GM12878 (cell line): ENCODE measurements at regions of chr6 and their contacts with region 1.

Region 1: GRCh38 chr6:125888989-125889656 is 67.4 kb upstream of the HINT3 start:
- DNase-seq: no peak
- ATAC-seq: peak; percentile 66
- H3K4me3 ChIP-seq: no peak overlapping the region
- H3K27ac ChIP-seq: no peak overlapping the region
- H3K4me1 ChIP-seq: no peaks in the 10 kb centered on the region
- H3K27me3 ChIP-seq: no peaks in the 10 kb centered on the region
- CTCF ChIP-seq: peak; percentile 46 to 52 (median 50)
- EP300 ChIP-seq: no peak
- POLR2A ChIP-seq: no peak
- RAD21 ChIP-seq: peak; percentile 51

Region 2: DNA sequence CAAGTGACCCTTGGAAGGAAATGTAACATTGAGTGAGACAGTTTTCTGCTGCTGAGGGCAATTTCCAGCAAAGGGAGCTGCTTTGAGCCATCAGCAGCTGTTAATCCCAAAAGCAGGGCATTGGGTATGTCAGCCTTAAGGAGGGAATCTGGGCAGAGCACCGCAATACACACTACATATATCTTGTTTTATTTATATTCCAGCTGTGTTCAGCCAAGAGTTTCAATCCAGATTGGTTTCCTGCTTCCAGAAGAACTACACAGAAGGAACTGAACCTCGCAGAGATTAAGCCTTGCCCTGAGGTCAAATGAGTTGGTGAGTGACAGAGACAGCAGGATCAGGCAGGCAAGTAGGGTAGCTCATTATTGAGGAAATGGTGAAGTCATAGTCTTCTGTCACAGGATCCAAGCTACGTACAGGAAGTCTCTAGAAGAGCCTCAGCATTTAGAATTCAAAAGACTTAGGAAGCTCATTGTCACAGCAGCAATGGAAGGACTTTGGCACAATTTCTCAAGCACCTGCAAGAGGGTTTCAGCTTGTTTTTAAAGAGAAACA is 249.6 kb before region 1 on chr6:
- CTCF ChIA-PET with region 1: no interaction called
- POLR2A ChIA-PET with region 1: no interaction called
- RAD21 ChIA-PET with region 1: no interaction called
- SMC1A ChIA-PET with region 1: no interaction called
- in situ Hi-C with region 1: no loop called
- intact Hi-C with region 1: no loop called
- DNase-seq: no peak
- ATAC-seq: no peak
- H3K4me3 ChIP-seq: no peak overlapping the region
- H3K27ac ChIP-seq: no peak overlapping the region
- H3K4me1 ChIP-seq: no peaks in the 10 kb centered on the region
- H3K27me3 ChIP-seq: no peaks in the 10 kb centered on the region; a peak in 1 of 4 replicates
- CTCF ChIP-seq: no peak
- EP300 ChIP-seq: no peak
- POLR2A ChIP-seq: no peak
- RAD21 ChIP-seq: no peak

Region 3: GRCh38 chr6:125899726-125900182 is 10.6 kb after region 1 on chr6:
- CTCF ChIA-PET with region 1: interaction called, 30 read pairs
- POLR2A ChIA-PET with region 1: interaction called, 4 read pairs
- RAD21 ChIA-PET with region 1: no interaction called
- SMC1A ChIA-PET with region 1: interaction called, 4 read pairs
- in situ Hi-C with region 1: no loop called
- intact Hi-C with region 1: no loop called
- DNase-seq: no peak
- ATAC-seq: peak; percentile 39; the same call in 2 of the 3 replicates
- H3K4me3 ChIP-seq: no peak overlapping the region
- H3K27ac ChIP-seq: no peak overlapping the region
- H3K4me1 ChIP-seq: no peaks in the 10 kb centered on the region
- H3K27me3 ChIP-seq: no peaks in the 10 kb centered on the region
- CTCF ChIP-seq: no peak
- EP300 ChIP-seq: no peak
- POLR2A ChIP-seq: no peak
- RAD21 ChIP-seq: no peak

Region 4: DNA sequence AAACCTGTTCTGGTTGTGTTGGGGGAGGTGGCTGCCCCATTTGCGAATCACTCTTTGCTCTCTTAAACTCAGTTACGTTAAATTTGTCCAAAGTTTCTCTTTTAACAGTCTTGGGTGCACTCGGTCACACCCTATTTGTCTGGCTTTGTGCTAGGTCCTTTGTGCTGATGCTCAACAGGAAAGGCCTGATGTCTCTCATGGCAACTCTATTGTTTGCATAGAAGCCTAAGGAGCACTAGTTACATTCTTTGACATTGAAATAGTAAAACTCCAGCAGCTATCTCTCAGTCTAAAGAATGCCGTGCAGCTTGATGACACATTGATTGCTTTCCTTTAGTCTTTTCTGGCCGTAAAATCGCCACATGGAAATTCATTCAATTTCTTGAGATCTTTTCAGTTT is 202.4 kb after region 1 on chr6:
- CTCF ChIA-PET with region 1: no interaction called
- POLR2A ChIA-PET with region 1: no interaction called
- RAD21 ChIA-PET with region 1: no interaction called
- SMC1A ChIA-PET with region 1: no interaction called
- in situ Hi-C with region 1: no loop called
- intact Hi-C with region 1: no loop called
- DNase-seq: no peak
- ATAC-seq: no peak
- H3K4me3 ChIP-seq: no peak overlapping the region
- H3K27ac ChIP-seq: no peak overlapping the region
- H3K4me1 ChIP-seq: no peaks in the 10 kb centered on the region
- H3K27me3 ChIP-seq: no peaks in the 10 kb centered on the region
- CTCF ChIP-seq: no peak
- EP300 ChIP-seq: no peak
- POLR2A ChIP-seq: no peak
- RAD21 ChIP-seq: no peak